ENCODE measurements at regions of chr5 and their contacts with region 1.

Region 1: DNA sequence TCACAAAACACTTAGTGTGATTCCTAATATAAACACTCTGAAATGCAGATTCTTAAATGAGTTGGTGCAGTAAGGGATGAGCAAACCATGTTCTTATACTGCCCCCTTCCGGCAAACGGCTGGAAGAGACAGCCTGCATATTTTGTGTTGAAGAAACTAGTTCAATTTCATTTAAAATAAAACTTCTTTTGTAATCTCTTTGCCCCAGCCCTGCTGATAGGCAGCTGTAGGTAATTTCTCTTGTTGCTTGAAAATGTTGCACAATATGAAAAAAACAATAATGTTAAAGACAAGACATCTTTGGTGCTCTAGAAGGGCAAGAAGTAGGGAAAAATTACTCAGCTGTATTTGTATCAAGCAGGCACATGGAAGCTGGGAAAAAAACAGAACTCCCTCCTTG is 89.7 kb upstream of the CCNG1 start:
- DNase-seq: peak; percentile 32
- H3K4me3 ChIP-seq: no peak overlapping the region
- H3K27ac ChIP-seq: no peak overlapping the region
- H3K4me1 ChIP-seq: no peaks in the 10 kb centered on the region
- H3K27me3 ChIP-seq: no peaks in the 10 kb centered on the region
- CTCF ChIP-seq: peak; percentile 77 to 83

Region 2: DNA sequence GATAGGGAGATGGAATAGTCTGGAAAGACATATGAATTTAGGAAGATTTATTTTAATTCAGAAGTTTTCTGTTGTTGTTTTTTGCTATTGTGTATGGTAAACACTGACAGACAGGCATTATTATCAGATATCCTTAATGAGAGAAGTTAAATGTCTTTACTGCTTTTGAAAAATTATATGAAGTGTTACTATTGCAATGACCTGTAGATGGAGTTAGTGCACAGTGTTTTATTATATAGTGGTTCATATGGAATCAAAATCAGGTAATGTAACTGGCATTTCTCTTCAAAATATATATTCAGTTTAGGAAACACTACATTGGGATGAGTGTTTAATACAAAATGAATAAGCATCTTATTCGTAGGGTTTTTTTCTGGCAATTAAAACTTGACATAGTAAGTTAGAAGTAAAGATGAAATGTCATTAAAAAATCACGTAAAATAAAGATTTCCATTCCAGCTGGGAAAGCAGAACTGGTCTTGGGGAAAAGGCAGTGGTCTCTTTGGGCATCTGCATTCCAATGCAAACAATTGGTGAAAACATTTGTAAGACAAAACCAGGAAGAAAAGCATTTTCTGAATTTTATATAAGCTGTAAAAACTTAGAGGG is 1495.9 kb before region 1 on chr5:
- CTCF ChIA-PET with region 1: no interaction called
- dilution Hi-C with region 1: no loop called
- in situ Hi-C with region 1: loop called in 1 of 2 experiments (anchors 25 kb)
- intact Hi-C with region 1: loop called (anchors 1 kb)
- DNase-seq: no peak
- H3K4me3 ChIP-seq: no peak overlapping the region
- H3K27ac ChIP-seq: no peak overlapping the region
- H3K4me1 ChIP-seq: no peaks in the 10 kb centered on the region
- H3K27me3 ChIP-seq: peaks cover 8% of the 10 kb centered on the region
- CTCF ChIP-seq: peak in 1 of 2 donors; percentile 45

Region 3: GRCh38 chr5:162929104-162929503 is 418.6 kb before region 1 on chr5:
- CTCF ChIA-PET with region 1: no interaction called
- dilution Hi-C with region 1: no loop called
- in situ Hi-C with region 1: no loop called
- intact Hi-C with region 1: no loop called
- DNase-seq: no peak
- H3K4me3 ChIP-seq: no peak overlapping the region
- H3K27ac ChIP-seq: no peak overlapping the region
- H3K4me1 ChIP-seq: no peaks in the 10 kb centered on the region
- H3K27me3 ChIP-seq: no peaks in the 10 kb centered on the region
- CTCF ChIP-seq: no peak

Region 4: GRCh38 chr5:163306421-163306820 is 41.2 kb before region 1 on chr5:
- CTCF ChIA-PET with region 1: no interaction called
- dilution Hi-C with region 1: no loop called
- in situ Hi-C with region 1: no loop called
- intact Hi-C with region 1: loop called (anchors 2 kb)
- DNase-seq: peak; percentile 9
- H3K4me3 ChIP-seq: no peak overlapping the region
- H3K27ac ChIP-seq: no peak overlapping the region
- H3K4me1 ChIP-seq: no peaks in the 10 kb centered on the region
- H3K27me3 ChIP-seq: no peaks in the 10 kb centered on the region
- CTCF ChIP-seq: peak; percentile 41 to 56

Region 5: DNA sequence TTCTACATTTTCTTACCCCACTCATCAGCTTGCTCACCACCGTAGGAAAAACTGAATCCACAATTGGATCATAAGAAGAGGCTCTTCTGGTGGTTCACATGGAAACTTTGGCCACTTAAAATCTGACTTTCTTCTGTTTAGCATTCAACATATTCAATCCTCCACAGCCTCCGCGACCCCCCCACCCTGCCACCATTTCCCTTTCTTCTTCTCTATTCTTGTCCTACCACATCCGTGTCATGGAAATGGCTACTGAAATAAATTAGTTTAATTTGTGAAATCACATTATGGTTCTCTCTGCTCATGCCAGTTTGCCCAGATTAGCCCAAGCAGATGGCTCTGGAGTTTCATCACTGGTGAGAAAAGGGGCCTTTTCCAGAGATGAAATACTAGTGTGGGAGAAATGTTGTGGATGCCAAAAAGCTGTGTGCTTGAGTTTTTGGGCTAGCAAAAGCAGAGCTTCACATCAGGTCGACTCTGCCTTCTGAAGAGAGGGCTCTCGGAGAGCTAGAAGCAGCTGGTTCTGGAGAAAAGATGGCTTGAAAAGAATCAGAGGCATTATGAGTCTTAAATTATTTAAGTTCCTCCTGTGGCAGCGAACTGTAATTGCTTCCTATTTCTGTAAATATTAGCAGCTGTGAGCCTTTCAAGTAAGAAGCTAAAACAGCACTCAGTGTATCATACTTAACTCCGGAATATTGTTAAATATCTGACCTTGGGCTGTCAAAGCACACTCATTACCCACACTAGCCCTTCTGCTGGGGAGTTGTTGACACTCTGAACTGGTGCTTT is 264.9 kb after region 1 on chr5:
- CTCF ChIA-PET with region 1: no interaction called
- dilution Hi-C with region 1: no loop called
- in situ Hi-C with region 1: no loop called
- intact Hi-C with region 1: no loop called
- DNase-seq: no peak
- H3K4me3 ChIP-seq: no peak overlapping the region
- H3K27ac ChIP-seq: no peak overlapping the region
- H3K4me1 ChIP-seq: no peaks in the 10 kb centered on the region
- H3K27me3 ChIP-seq: peaks cover 7% of the 10 kb centered on the region
- CTCF ChIP-seq: no peak

Measured in mammary epithelial cell (primary cell).